Calu3 (cell line): ENCODE measurements at regions of chr1 and their contacts with region 1.

Region 1: DNA sequence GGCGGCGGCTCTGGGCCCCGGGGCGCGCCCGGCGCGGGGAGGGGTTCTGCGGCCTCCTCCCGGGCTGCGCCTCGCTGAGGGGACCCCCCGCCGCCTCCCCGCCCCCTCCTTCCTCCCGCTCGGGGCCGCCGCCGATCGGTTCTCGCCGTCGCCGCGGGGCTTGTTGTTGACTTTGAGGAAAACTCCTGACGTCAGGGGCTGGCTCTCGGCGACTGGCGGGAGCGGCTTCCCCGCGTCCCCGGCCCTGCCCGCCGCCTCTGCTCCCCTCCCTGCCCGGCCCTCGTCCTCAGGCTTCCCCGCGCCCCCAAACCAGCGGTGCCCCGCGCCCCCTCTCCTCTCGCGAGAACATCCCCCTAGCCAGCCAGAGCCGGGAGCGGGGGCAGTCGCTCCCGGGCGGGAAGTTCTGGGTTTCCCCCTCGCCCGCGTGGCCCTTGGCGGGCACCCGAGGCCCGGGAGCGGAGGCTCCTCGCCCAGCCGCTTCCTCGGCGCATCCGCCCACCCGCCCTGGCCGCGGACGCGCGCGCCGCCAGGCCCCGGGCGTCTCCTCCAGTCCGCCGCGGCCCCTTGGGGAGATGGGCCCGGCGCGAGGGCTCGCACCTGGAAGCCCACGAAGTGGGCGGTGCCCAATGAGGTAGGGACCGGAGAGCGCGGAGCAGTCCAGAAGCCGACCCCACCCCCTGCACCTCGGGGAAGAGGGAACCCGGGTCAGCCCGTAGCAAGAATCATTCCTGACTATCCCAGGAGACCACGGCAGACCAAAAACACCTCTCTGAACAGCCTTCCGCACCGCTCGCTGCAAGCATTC is 611 bp upstream of the AKT3 start:
- DNase-seq: peak; percentile 84
- H3K4me3 Mint-ChIP-seq: peak overlapping the region; percentile 96
- H3K27ac Mint-ChIP-seq: peak overlapping the region; percentile 84
- H3K4me1 Mint-ChIP-seq: peaks cover 24% of the 10 kb centered on the region
- H3K27me3 Mint-ChIP-seq: no peaks in the 10 kb centered on the region
- CTCF ChIP-seq: no peak

Region 2: DNA sequence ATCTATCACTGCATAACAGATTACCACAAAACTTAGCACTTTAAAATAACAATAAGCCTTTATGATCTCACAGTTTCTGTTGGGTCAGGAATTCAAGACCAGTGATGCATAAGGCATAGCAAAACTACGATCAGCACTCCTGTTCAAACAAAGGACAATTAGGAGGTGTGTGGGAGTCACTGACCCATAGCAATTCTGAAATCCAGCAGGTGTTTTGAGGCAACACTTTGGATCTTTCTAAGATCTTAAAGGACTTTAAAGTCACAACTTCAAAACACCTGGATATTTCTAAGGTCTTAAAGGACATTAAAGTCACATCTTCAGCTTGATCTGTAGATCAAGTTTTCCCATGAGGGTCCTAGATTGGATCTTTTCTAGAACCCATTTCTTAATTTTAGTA is 35.9 kb before region 1 on chr1:
- CTCF ChIA-PET with region 1: no interaction called
- intact Hi-C with region 1: no loop called
- DNase-seq: no peak
- H3K4me3 Mint-ChIP-seq: no peak overlapping the region
- H3K27ac Mint-ChIP-seq: no peak overlapping the region
- H3K4me1 Mint-ChIP-seq: no peaks in the 10 kb centered on the region
- H3K27me3 Mint-ChIP-seq: no peaks in the 10 kb centered on the region
- CTCF ChIP-seq: no peak

Region 3: GRCh38 chr1:243926803-243927279 is 76.2 kb after region 1 on chr1:
- CTCF ChIA-PET with region 1: no interaction called
- intact Hi-C with region 1: loop called (anchors 5 kb)
- DNase-seq: peak; percentile 36
- H3K4me3 Mint-ChIP-seq: no peak overlapping the region
- H3K27ac Mint-ChIP-seq: no peak overlapping the region
- H3K4me1 Mint-ChIP-seq: peaks cover 41% of the 10 kb centered on the region
- H3K27me3 Mint-ChIP-seq: no peaks in the 10 kb centered on the region
- CTCF ChIP-seq: no peak